B cell (primary cell): ENCODE measurements at regions of chr1 and their contacts with region 1.

Region 1: GRCh38 chr1:109984456-109985275 is at the start of gene AHCYL1:
- DNase-seq: peak; percentile 99
- ATAC-seq: peak; percentile 100
- H3K4me3 ChIP-seq: peak within 1 kb of the TSS; percentile 59 to 88 (median 82)
- H3K4me3 Mint-ChIP-seq: peak within 1 kb of the TSS; percentile 99
- H3K27ac ChIP-seq: peak within 1 kb of the TSS; percentile 72 to 92
- H3K27ac Mint-ChIP-seq: peak within 1 kb of the TSS; percentile 98
- H3K4me1 ChIP-seq: peaks cover 22 to 23% of the 10 kb centered on the region in 2 donors
- H3K4me1 Mint-ChIP-seq: peaks cover 47% of the 10 kb centered on the region
- H3K27me3 ChIP-seq: no peaks in the 10 kb centered on the region
- H3K27me3 Mint-ChIP-seq: no peaks in the 10 kb centered on the region
- CTCF ChIP-seq: peak; percentile 93
- total RNA-seq, gene AHCYL1: 51.4 and 58.7 TPM in 2 replicates

Region 2: DNA sequence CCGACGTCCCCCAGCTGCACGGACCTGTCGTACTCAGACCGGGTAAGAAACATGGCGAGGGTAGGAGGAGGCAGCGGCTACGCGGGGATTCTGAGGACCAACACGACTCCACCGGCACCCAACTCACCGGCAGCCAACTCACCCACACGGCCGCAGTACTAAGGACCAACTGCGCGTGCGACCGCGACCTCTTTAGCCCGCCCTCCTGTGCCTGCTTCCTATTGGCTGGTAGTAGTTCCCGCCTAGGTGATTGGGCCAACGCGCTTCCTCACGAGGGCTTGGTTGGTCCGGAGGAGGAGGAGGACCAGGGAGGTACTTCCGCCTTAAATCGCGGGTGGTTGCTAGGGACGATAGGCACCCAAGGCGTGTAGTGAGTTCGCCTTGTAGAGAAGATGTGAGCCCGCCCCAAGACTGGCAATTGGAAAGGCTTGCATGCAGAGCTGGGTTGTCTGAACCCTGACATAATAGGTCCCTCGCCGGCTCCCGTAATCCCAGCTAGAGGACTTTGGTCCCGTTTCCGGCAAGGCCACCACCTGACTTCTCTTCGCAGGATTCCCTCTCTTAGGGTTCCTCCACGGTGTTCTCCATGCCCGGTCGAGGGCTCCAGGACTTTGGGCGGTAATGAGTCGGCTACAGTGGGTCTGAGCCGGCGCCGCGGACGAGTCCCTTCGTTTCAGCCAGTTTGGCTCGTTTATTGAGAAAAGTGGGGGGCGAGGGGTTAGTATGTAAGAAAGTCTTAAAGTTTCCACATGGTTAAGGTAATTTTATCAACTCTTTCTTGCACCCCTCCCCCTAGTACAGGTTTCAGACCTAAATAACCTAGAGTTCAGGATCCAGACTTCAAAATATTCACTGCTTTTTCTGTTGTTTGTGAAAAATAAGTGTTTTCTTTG is 558.1 kb before region 1 on chr1 and contains the start of gene PSMA5:
- CTCF ChIA-PET with region 1: no interaction called
- POLR2A ChIA-PET with region 1: no interaction called
- intact Hi-C with region 1: loop called (anchors 1 kb)
- DNase-seq: peak; percentile 97
- ATAC-seq: peak; percentile 95
- H3K4me3 ChIP-seq: peak within 1 kb of the TSS; percentile 72 to 98 (median 79)
- H3K4me3 Mint-ChIP-seq: peak within 1 kb of the TSS; percentile 98
- H3K27ac ChIP-seq: peak within 1 kb of the TSS; percentile 71 to 82
- H3K27ac Mint-ChIP-seq: peak within 1 kb of the TSS; percentile 98
- H3K4me1 ChIP-seq: peaks cover 13 to 19% of the 10 kb centered on the region in 2 donors
- H3K4me1 Mint-ChIP-seq: peaks cover 33% of the 10 kb centered on the region
- H3K27me3 ChIP-seq: no peaks in the 10 kb centered on the region
- H3K27me3 Mint-ChIP-seq: no peaks in the 10 kb centered on the region
- CTCF ChIP-seq: no peak
- total RNA-seq, gene PSMA5: 58.3 and 62.9 TPM in 2 replicates

Region 3: GRCh38 chr1:109589177-109589576 is 395.5 kb before region 1 on chr1:
- CTCF ChIA-PET with region 1: no interaction called
- POLR2A ChIA-PET with region 1: no interaction called
- intact Hi-C with region 1: no loop called
- DNase-seq: no peak
- ATAC-seq: no peak
- H3K4me3 ChIP-seq: no peak overlapping the region
- H3K4me3 Mint-ChIP-seq: no peak overlapping the region
- H3K27ac ChIP-seq: no peak overlapping the region
- H3K27ac Mint-ChIP-seq: no peak overlapping the region
- H3K4me1 ChIP-seq: no peaks in the 10 kb centered on the region
- H3K4me1 Mint-ChIP-seq: no peaks in the 10 kb centered on the region
- H3K27me3 ChIP-seq: no peaks in the 10 kb centered on the region
- H3K27me3 Mint-ChIP-seq: no peaks in the 10 kb centered on the region
- CTCF ChIP-seq: no peak

Region 4: DNA sequence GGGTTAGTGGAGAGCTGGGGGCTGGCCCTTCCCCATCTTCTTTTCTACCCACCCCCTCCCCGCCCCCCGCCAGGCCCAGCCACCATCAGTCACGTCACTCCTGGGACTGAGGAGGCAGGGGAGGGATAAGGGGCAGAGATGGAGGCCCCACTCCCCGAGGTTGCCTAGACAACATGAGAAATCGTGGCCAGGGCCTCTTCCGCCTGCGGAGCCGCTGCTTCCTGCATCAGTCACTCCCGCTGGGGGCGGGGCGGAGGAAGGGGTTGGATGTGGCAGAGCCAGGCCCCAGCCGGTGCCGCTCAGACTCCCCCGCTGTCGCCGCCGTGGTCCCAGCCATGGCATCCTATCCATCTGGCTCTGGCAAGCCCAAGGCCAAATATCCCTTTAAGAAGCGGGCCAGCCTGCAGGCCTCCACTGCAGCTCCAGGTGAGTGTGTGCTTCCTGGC is 363.8 kb before region 1 on chr1:
- CTCF ChIA-PET with region 1: interaction called, 13 read pairs
- POLR2A ChIA-PET with region 1: no interaction called
- intact Hi-C with region 1: loop called (anchors 1 kb)
- DNase-seq: peak; percentile 86
- ATAC-seq: peak; percentile 59
- H3K4me3 ChIP-seq: peak overlapping the region; percentile 65 to 94 (median 84)
- H3K4me3 Mint-ChIP-seq: peak overlapping the region; percentile 99
- H3K27ac ChIP-seq: peak overlapping the region; percentile 64 to 90
- H3K27ac Mint-ChIP-seq: peak overlapping the region; percentile 96
- H3K4me1 ChIP-seq: peaks cover 50 to 65% of the 10 kb centered on the region in 2 donors
- H3K4me1 Mint-ChIP-seq: peaks cover 72% of the 10 kb centered on the region
- H3K27me3 ChIP-seq: no peaks in the 10 kb centered on the region
- H3K27me3 Mint-ChIP-seq: no peaks in the 10 kb centered on the region
- CTCF ChIP-seq: no peak

Region 5: DNA sequence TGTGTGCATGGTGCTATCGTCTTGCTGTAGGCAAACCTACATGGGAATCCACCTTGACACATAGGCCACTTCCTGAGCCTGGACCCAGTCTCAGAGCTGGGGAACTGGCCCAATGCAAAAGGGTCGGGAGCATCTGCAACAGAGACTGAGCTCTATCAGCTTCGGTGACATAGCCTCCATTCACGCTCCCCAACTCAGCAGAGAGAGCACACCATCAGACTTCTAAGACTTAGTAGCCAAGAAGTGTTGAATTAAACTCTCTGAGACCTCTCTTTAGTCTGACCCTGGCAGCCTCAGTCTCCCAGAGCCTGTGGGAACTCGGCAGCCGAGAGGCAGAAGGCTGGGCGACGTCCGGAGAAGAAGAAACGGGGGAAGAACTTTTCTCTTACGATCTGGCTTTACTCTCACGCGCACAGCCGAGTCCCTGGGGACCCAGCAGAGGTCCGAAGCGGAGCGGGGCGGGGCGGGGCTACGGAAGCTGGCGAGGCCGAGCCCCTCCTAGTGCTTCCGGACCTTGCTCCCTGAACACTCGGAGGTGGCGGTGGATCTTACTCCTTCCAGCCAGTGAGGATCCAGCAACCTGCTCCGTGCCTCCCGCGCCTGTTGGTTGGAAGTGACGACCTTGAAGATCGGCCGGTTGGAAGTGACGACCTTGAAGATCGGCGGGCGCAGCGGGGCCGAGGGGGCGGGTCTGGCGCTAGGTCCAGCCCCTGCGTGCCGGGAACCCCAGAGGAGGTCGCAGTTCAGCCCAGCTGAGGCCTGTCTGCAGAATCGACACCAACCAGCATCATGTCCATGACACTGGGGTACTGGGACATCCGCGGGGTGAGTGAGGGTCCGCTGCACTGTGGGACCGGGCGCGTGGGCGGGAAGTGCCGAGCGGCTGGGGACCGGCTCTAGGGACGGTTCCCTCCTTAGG is 328.8 kb before region 1 on chr1 and contains the start of gene GSTM4:
- CTCF ChIA-PET with region 1: interaction called, 18 read pairs
- POLR2A ChIA-PET with region 1: no interaction called
- intact Hi-C with region 1: loop called (anchors 1 kb)
- DNase-seq: peak; percentile 90
- ATAC-seq: peak; percentile 96
- H3K4me3 ChIP-seq: peak within 1 kb of the TSS; percentile 45 to 97 (median 90)
- H3K4me3 Mint-ChIP-seq: peak within 1 kb of the TSS; percentile 96
- H3K27ac ChIP-seq: peak within 1 kb of the TSS; percentile 37 to 76
- H3K27ac Mint-ChIP-seq: peak within 1 kb of the TSS; percentile 93
- H3K4me1 ChIP-seq: peaks cover 11 to 17% of the 10 kb centered on the region in 2 donors
- H3K4me1 Mint-ChIP-seq: peaks cover 23% of the 10 kb centered on the region
- H3K27me3 ChIP-seq: peaks cover 0 to 6% (median 0%) of the 10 kb centered on the region in 4 experiments
- H3K27me3 Mint-ChIP-seq: peaks cover 20% of the 10 kb centered on the region
- CTCF ChIP-seq: no peak
- total RNA-seq, gene GSTM4: 28.6 and 39.4 TPM in 2 replicates

Region 6: GRCh38 chr1:109796484-109797302 is 188.0 kb before region 1 on chr1:
- CTCF ChIA-PET with region 1: interaction called, 667 read pairs
- POLR2A ChIA-PET with region 1: no interaction called
- intact Hi-C with region 1: no loop called
- DNase-seq: no peak
- ATAC-seq: no peak
- H3K4me3 ChIP-seq: no peak overlapping the region
- H3K4me3 Mint-ChIP-seq: no peak overlapping the region
- H3K27ac ChIP-seq: no peak overlapping the region
- H3K27ac Mint-ChIP-seq: no peak overlapping the region
- H3K4me1 ChIP-seq: peaks cover 0 to 6% of the 10 kb centered on the region in 2 donors
- H3K4me1 Mint-ChIP-seq: no peaks in the 10 kb centered on the region
- H3K27me3 ChIP-seq: peaks cover 0 to 16% (median 0%) of the 10 kb centered on the region in 4 experiments
- H3K27me3 Mint-ChIP-seq: peaks cover 15% of the 10 kb centered on the region
- CTCF ChIP-seq: no peak

Region 7: DNA sequence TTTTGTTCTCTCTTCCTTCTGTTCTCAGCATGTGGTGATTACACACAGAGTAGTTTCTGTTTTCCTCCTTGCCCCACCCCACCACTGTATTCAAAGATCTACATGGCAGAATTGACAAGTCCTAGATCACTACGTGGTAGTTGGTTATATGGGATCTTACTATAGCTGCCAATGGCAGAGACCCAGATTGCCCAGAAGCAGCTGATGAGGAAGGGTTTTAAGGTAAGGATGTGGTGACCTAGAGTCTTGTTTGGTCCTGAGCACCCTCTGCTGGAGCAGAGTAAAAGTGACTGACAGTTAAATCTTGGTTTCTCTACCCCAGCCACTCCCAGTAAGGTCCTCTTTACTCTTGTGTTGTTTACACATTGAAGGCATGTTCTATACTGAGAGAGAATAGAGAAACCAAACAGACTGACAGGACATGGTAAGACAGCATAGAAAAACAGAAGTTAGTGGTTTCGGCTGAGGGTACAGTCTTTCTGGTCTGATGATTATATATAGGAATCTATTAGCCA is 26.9 kb after region 1 on chr1:
- CTCF ChIA-PET with region 1: interaction called, 127 read pairs
- POLR2A ChIA-PET with region 1: interaction called, 6 read pairs
- intact Hi-C with region 1: loop called (anchors 1 kb)
- DNase-seq: peak; percentile 92
- ATAC-seq: peak; percentile 93
- H3K4me3 ChIP-seq: peak overlapping the region in 3 of 5 experiments; percentile 29 to 37 (median 34)
- H3K4me3 Mint-ChIP-seq: peak overlapping the region; percentile 82
- H3K27ac ChIP-seq: peak overlapping the region; percentile 93 to 94
- H3K27ac Mint-ChIP-seq: peak overlapping the region; percentile 98
- H3K4me1 ChIP-seq: peaks cover 25 to 27% of the 10 kb centered on the region in 2 donors
- H3K4me1 Mint-ChIP-seq: peaks cover 33% of the 10 kb centered on the region
- H3K27me3 ChIP-seq: no peaks in the 10 kb centered on the region
- H3K27me3 Mint-ChIP-seq: no peaks in the 10 kb centered on the region
- CTCF ChIP-seq: peak; percentile 79